CD4-positive, alpha-beta memory T cell (primary cell): ENCODE measurements at regions of chr1 and their contacts with region 1.

Region 1: DNA sequence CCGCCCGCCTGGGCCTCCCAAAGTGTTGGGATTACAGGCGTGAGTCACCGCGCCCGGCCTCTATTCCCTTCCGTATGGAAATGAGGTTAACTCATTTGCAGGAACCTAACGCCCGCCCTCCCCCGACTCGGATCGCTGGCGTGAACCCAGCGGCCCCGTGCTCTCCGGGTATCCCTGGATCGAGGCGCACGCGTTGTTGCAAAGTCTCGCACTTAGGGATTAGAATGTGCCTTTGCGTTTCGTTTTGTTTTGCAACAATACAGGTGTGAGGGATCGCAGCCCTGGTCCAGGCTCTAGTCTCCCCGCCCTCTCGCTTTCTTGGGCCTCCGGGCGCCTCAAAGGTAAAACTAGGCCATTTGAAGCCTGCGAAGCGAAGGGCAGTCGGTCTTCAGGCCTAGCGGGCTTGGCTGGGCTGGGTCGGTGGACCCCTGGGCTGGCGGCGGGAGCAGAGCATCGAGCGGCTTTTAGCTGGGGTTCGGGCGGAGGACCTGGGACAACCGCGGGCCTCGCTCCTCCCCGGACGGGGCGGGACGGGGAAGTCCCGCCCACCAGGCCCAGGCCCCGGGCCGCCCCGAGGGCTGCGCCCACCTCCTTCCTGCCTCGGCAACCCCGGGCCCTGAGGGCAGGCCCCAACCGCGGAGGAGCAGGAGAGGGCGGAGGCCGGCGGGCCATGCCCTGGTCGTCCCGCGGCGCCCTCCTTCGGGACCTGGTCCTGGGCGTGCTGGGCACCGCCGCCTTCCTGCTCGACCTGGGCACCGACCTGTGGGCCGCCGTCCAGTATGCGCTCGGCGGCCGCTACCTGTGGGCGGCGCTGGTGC is at the start of gene XKR8:
- DNase-seq: peak; percentile 84 to 88 (median 85)
- H3K4me3 ChIP-seq: peak within 1 kb of the TSS; percentile 63 to 73
- H3K4me3 Mint-ChIP-seq: peak within 1 kb of the TSS; percentile 87 to 92 (median 89)
- H3K27ac ChIP-seq: peak within 1 kb of the TSS; percentile 83
- H3K27ac Mint-ChIP-seq: peak within 1 kb of the TSS; percentile 81 to 94 (median 92)
- H3K4me1 ChIP-seq: peaks cover 32% of the 10 kb centered on the region
- H3K4me1 Mint-ChIP-seq: peaks cover 17 to 40% (median 25%) of the 10 kb centered on the region in 4 donors
- H3K27me3 ChIP-seq: no peaks in the 10 kb centered on the region
- H3K27me3 Mint-ChIP-seq: no peaks in the 10 kb centered on the region
- total RNA-seq, gene XKR8: 13.1 to 14.5 TPM

Region 2: GRCh38 chr1:27979151-27979858 is 19.7 kb after region 1 on chr1:
- CTCF ChIA-PET with region 1: interaction called, 5 read pairs
- POLR2A ChIA-PET with region 1: interaction called, 3 read pairs
- intact Hi-C with region 1: loop called (anchors 1 kb)
- DNase-seq: peak in 4 of 5 donors; percentile 49 to 56 (median 53)
- H3K4me3 ChIP-seq: no peak overlapping the region
- H3K4me3 Mint-ChIP-seq: no peak overlapping the region
- H3K27ac ChIP-seq: no peak overlapping the region
- H3K27ac Mint-ChIP-seq: no peak overlapping the region
- H3K4me1 ChIP-seq: no peaks in the 10 kb centered on the region
- H3K4me1 Mint-ChIP-seq: no peaks in the 10 kb centered on the region
- H3K27me3 ChIP-seq: no peaks in the 10 kb centered on the region
- H3K27me3 Mint-ChIP-seq: no peaks in the 10 kb centered on the region